ENCODE measurements at regions of chr1 and their contacts with region 1.

Region 1: DNA sequence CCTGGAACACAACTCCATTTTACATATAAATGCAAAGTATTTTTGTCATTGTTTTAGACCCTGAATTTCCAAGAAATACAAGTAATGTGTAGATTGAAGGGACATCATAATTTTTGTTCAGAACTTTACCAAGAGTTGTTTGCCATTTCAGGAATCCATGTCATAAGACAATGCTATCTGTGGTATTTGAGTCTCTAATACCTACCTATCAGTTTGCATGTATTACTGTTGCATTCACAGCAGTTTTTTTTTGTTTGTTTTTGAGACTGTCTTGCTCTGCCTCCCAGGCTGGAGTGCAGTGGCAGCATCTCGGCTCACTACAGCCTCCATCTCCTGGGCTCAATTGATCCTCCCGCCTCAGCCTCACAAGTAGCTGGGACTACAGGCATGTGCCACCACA is 17.1 kb downstream of the MPZ start:
- DNase-seq: no peak
- CTCF ChIP-seq: no peak

Region 2: DNA sequence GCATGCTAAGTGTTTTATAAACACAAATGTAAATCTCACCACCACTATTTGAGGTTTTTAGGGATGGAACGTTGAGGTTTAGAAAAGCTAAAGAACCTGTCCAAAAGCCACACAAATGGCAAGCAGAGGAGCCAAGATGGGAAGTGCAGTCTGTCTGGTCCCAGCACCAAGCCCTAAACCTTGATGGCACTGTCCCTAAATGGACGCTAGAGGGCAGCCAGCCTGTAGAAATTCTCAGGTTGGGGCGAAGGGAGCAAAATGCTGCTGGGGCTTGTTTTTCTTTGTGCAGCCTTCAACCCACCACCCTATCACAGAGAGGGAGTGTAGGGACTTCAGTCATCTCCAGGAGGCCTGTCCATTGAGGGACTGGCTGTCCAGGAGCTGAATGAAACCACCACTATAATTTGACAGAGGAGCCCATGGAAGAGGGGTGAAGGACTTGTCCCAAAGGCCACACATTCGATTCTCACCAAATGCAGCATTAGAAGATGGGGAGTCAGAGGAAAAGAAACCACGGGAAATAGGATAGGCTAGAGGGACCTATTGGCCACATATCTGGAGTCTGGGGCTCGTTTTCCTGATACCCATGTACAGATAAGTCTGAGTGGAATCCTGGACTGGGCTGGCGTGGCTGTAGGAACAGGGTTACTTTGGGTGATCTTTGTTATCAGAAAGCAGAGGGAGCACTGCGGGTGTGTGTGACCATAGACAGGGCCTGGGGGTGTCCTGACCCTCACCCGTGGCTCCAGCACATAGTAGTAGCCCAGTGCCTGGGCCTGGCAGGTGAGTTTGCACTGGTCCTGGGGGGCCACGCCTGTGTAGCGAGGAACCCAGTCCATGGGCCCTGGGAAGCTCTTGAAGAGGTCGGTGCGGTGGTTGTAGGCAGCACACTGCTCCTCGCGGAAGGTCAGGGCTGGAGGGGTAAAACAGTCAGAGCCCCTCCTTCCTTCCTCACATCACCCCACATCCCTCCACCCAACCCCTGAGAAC is 99.9 kb before region 1 on chr1:
- CTCF ChIA-PET with region 1: interaction called, 12 read pairs
- POLR2A ChIA-PET with region 1: no interaction called
- DNase-seq: peak; percentile 83
- CTCF ChIP-seq: peak; percentile 94

Region 3: GRCh38 chr1:161250829-161251228 is 41.8 kb before region 1 on chr1:
- CTCF ChIA-PET with region 1: interaction called, 18 read pairs
- POLR2A ChIA-PET with region 1: no interaction called
- DNase-seq: no peak
- CTCF ChIP-seq: no peak

Region 4: DNA sequence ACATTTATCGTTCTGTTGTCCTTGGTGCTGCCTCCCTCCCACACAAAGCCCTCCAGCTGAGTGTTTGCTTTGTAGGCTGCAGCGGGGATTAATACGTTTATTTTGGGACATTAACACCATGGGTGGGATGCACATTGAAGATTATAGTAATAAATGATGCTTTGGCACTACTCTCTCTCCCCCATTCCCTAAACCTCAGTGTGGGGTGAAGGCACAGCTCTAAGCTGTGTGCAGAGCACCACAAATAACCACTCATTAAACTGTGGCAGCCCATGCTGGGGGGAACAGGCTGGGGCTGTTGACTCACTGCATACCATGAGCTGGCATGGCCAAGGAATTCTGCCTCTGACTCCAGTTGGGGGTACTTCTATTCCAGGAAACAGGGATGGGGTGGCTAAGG is 26.4 kb before region 1 on chr1:
- CTCF ChIA-PET with region 1: interaction called, 16 read pairs
- POLR2A ChIA-PET with region 1: no interaction called
- DNase-seq: no peak
- CTCF ChIP-seq: no peak

Region 5: DNA sequence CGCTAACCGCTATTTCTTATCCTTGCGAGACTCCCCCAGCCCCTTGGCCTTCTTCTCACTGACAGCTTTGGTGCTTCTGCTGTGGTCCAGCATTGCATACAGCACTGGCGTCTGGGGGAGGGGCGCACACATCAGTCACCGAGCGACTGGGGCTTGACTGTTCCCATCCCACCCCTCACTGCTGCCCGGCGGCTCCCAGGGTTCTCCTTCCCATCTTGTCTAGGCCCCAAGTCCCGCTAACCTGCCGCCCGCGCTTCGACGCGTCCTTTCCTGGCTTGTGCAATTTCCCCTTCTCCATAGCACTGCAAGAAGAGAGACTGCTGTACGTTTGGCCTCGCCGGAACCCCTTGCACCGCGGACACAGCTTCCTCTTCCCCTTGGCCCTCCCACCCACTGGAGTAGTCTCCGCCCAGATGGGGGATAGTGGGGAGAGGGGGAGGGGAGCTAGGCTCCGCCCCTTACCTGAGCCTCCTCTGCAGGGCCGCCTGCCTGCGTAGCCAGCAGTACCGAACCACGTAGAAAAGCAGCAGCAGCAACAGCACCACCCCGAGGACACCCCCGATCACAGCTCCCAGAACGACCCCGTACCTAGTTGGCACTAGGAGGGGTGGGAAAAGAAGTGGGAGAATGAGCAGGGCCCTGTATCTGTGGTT is 13.4 kb after region 1 on chr1:
- CTCF ChIA-PET with region 1: interaction called, 34 read pairs
- POLR2A ChIA-PET with region 1: no interaction called
- DNase-seq: peak; percentile 89
- CTCF ChIP-seq: peak; percentile 46

Region 6: DNA sequence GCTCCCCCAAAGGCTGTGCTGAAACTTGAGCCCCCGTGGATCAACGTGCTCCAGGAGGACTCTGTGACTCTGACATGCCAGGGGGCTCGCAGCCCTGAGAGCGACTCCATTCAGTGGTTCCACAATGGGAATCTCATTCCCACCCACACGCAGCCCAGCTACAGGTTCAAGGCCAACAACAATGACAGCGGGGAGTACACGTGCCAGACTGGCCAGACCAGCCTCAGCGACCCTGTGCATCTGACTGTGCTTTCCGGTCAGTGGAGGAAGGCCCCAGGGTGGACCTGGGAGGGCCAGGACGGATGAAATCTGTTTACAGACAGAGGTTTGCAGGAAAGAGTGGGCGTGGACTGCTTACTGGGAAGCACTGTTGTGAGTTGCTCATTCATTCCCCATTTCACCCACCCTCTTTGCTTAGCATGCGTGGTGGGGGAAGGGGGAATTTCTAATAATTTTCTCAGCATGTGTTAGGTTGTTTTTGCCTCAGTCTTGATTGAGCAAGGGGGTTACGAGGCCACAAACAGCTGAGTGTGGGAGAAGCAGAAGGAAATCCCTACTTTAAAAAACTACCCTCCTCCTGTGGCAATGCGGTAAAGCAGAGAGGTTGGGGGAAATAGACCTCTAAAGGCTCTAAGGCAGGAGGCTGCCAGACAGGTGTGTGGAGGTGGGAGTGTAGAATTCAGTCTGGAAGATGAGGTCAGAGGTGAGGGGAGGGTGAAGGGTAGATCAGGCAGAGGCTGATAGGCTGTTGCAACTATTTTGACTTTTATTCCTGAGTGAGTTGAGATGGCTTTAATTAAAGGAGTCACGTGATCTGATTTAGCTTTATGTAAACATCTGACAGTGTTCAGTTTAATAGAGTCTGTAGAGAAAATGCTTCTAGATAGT is 213.9 kb after region 1 on chr1:
- CTCF ChIA-PET with region 1: no interaction called
- POLR2A ChIA-PET with region 1: no interaction called
- DNase-seq: no peak
- CTCF ChIP-seq: no peak

Measured in GM10248 (cell line).